Heart right ventricle (tissue), 16 donors: ENCODE measurements at regions of chr1 and their contacts with region 1.

Region 1: GRCh38 chr1:90964444-90965035 is 57.3 kb downstream of the ZNF644 start:
- DNase-seq: no peak
- ATAC-seq: peak in 1 of 8 donors; percentile 41
- H3K4me3 ChIP-seq: no peak overlapping the region
- H3K27ac ChIP-seq: no peak overlapping the region
- H3K4me1 ChIP-seq: peaks cover 0 to 27% (median 5%) of the 10 kb centered on the region in 9 donors
- H3K27me3 ChIP-seq: no peaks in the 10 kb centered on the region
- CTCF ChIP-seq: peak in 8 of 9 donors; percentile 32 to 64 (median 47)

Region 2: DNA sequence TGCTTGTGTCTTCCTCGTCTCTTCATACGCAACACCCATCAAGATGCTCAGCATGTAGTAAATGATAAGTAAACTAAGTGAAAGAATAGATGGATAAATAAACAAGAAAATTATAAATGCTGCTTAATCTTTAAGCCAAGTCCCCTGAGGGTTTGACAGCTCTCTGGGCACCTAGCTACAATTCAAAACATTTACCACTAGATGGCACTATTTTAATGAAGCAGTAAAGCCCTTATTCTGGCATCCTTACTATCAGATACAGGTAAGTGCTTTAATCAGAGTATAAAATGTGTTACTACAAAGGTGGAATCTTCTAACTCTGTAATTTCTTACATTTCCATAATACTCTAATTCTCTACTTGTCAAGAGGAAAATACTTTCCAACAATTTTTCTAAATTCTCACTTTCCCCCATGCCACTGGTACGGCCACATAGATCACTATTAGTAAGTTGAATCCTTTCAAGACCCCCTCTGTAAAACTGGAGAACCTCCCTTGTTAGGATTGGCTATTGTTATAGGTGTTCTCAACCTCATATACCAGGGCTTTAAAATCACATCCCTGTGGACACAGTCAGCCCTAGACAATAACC is 385.2 kb before region 1 on chr1:
- intact Hi-C with region 1: loop called in 1 of 10 experiments (anchors 10 kb)
- DNase-seq: no peak
- ATAC-seq: no peak
- H3K4me3 ChIP-seq: no peak overlapping the region
- H3K27ac ChIP-seq: no peak overlapping the region
- H3K4me1 ChIP-seq: no peaks in the 10 kb centered on the region
- H3K27me3 ChIP-seq: peaks cover 0 to 59% (median 12%) of the 10 kb centered on the region in 7 donors
- CTCF ChIP-seq: peak; percentile 26 to 75 (median 68)

Region 3: GRCh38 chr1:90850898-90851710 is 113.4 kb before region 1 on chr1:
- intact Hi-C with region 1: loop called in 1 of 10 experiments (anchors 10 kb)
- DNase-seq: peak; percentile 78 to 87
- ATAC-seq: peak; percentile 97 to 99 (median 98)
- H3K4me3 ChIP-seq: peak overlapping the region; percentile 78 to 96 (median 88)
- H3K27ac ChIP-seq: peak overlapping the region in 8 of 10 donors; percentile 15 to 73 (median 52)
- H3K4me1 ChIP-seq: peaks cover 0 to 18% (median 9%) of the 10 kb centered on the region in 9 donors
- H3K27me3 ChIP-seq: peaks cover 0 to 37% (median 0%) of the 10 kb centered on the region in 7 donors
- CTCF ChIP-seq: peak; percentile 70 to 94 (median 93)

Region 4: DNA sequence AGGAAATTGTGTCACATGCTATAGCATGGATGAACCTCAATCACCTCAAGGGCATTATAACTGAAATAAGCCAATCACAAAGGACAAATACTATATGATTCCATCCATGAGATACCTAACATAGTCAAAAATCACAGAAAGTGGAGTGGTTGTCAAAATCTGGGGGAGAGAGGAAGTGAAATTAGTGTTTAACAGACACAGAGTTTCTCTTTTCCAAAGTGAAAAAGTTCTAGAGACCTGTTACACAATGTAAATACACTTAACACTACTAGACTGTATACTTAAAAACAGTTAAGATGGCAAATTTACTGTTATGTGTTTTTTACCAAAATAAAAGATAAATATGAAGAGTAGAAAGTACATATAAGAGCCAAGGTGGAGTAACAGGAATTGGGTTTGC is 25.4 kb after region 1 on chr1:
- intact Hi-C with region 1: loop called in 1 of 10 experiments (anchors 2 kb)
- DNase-seq: no peak
- ATAC-seq: no peak
- H3K4me3 ChIP-seq: no peak overlapping the region
- H3K27ac ChIP-seq: no peak overlapping the region
- H3K4me1 ChIP-seq: peaks cover 0 to 45% (median 14%) of the 10 kb centered on the region in 9 donors
- H3K27me3 ChIP-seq: no peaks in the 10 kb centered on the region
- CTCF ChIP-seq: no peak

Region 5: DNA sequence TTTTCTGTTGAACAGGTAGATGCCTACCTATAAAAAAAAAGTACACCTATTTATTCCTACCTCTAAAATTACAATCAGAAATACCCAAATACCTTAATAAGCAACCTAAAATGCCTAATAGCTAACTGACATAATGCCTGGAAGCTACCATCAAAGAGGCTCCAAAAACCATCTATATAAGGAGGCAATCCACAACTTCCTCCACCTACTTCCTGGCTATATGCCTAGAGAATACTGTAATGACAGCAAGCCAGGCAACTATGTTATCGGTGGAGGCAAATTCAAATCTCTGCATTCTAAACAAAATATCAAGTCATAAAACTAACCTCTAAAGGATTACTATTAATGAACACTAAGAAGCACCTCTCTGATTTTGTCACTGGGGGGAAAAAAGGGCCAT is 47.2 kb after region 1 on chr1:
- intact Hi-C with region 1: loop called in 1 of 10 experiments (anchors 5 kb)
- DNase-seq: peak in 1 of 2 donors; percentile 24
- ATAC-seq: peak in 6 of 8 donors; percentile 78 to 96 (median 84)
- H3K4me3 ChIP-seq: no peak overlapping the region
- H3K27ac ChIP-seq: peak overlapping the region in 1 of 10 donors; percentile 30
- H3K4me1 ChIP-seq: peaks cover 0 to 68% (median 62%) of the 10 kb centered on the region in 9 donors
- H3K27me3 ChIP-seq: no peaks in the 10 kb centered on the region
- CTCF ChIP-seq: no peak